Common myeloid progenitor, CD34-positive (primary cell): ENCODE measurements at regions of chr6 and their contacts with region 1.

Region 1: DNA sequence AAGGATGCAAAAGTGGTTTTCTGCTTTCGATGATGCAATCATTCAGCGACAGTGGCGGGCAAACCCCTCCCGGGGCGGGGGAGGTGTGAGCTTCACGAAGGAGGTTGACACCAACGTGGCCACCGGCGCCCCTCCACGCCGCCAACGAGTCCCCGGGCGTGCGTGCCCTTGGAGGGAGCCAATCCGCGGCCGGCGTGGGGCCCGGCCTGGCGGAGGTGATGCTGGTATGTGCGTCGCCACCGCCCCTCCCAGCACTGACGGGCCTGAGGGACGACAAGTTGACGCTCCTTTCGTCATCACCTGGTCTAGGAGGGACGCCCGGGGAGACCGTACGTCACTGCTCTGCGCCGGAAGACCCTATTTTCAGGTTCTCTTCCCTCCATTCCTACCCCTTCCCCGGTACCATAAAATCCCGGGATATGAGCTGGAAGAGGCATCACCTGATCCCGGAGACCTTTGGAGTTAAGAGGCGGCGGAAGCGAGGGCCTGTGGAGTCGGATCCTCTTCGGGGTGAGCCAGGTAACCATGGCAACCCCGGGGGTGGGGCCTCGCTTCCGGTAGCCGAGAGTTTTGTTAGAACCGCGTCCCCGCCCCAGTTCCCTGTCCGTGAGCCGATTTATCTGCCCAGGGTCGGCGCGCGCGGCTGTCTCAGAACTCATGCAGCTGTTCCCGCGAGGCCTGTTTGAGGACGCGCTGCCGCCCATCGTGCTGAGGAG is at the start of gene DXO:
- DNase-seq: peak; percentile 99 to 100 (median 99)
- H3K4me3 ChIP-seq: peak within 1 kb of the TSS; percentile 80 to 95 (median 87)
- H3K27ac ChIP-seq: peak within 1 kb of the TSS; percentile 98 to 99
- H3K4me1 ChIP-seq: peaks cover 3 to 27% (median 23%) of the 10 kb centered on the region in 4 experiments
- H3K27me3 ChIP-seq: no peaks in the 10 kb centered on the region

Region 2: GRCh38 chr6:31945507-31946369 is 26.4 kb before region 1 on chr6 and contains the start of gene CFB:
- CTCF ChIA-PET with region 1: no interaction called
- POLR2A ChIA-PET with region 1: no interaction called
- DNase-seq: peak in 2 of 3 donors; percentile 32 to 33
- H3K4me3 ChIP-seq: no peak within 1 kb of the TSS
- H3K27ac ChIP-seq: no peak within 1 kb of the TSS
- H3K4me1 ChIP-seq: no peaks in the 10 kb centered on the region
- H3K27me3 ChIP-seq: peaks cover 0 to 5% (median 0%) of the 10 kb centered on the region in 5 experiments

Region 3: DNA sequence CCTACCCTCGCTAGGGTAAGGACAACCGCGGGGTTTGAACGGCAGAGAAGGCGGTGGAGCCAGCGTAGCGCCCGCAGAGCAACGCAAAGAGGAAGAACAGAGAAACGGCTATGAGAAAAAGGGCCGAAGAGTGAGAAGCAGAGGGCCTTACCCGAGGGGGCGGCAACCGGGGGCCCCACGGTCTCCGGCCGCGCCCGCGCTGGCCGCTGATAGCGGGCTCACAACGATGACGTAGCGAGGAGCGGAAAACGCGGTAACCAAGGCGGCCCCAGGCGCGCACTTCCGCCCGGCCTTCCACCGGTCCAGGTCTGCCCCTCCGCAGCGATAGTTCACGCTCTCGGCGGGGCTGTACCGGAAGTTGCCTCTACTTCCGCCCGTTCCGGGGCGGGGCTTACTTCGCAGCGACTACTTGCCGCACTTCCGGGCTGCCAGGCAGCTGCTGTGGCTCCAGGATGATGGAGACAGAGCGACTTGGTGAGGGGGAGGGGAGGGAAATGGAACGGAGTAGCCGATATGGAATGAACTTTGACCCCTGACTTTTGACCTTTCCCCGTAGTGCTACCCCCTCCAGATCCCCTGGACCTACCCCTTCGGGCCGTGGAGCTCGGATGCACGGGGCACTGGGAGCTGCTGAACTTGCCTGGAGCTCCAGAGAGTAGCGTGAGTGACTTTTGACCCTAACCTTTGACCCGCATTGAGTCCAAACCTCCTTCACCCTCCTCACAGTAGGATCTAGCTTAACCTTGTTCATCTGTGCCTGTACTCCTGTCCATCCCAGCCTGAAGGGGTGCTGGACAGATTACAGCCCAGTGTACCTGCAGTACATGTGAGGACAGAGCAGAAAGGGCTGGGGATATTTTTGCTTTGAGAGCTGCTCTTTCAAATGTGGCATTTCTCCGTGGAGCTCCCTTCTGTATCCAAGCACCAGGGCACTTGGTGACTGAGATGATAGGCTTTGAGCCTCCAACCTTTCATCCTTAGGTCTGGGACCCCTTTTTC is 13.1 kb before region 1 on chr6 and contains the starts of genes NELFE and SKIC2:
- CTCF ChIA-PET with region 1: interaction called, 37 read pairs
- POLR2A ChIA-PET with region 1: interaction called, 12 read pairs
- DNase-seq: peak; percentile 98 to 99 (median 99)
- H3K4me3 ChIP-seq: peak within 1 kb of the TSS; percentile 88 to 97 (median 96)
- H3K27ac ChIP-seq: peak within 1 kb of the TSS; percentile 89 to 98
- H3K4me1 ChIP-seq: peaks cover 13 to 20% (median 18%) of the 10 kb centered on the region in 4 experiments
- H3K27me3 ChIP-seq: no peaks in the 10 kb centered on the region